ENCODE measurements at regions of chr14 and their contacts with region 1.

Region 1: GRCh38 chr14:53432378-53432802 is 279.3 kb upstream of the DDHD1 start:
- DNase-seq: peak in 1 of 2 experiments; percentile 25
- H3K4me3 ChIP-seq: no peak overlapping the region
- H3K27ac ChIP-seq: no peak overlapping the region
- H3K4me1 ChIP-seq: no peaks in the 10 kb centered on the region
- H3K27me3 ChIP-seq: no peaks in the 10 kb centered on the region
- CTCF ChIP-seq: peak; percentile 82

Region 2: GRCh38 chr14:53539489-53540126 is 107.2 kb after region 1 on chr14:
- CTCF ChIA-PET with region 1: no interaction called
- POLR2A ChIA-PET with region 1: no interaction called
- intact Hi-C with region 1: loop called (anchors 1 kb)
- DNase-seq: peak; percentile 45 to 74
- H3K4me3 ChIP-seq: no peak overlapping the region
- H3K27ac ChIP-seq: no peak overlapping the region
- H3K4me1 ChIP-seq: no peaks in the 10 kb centered on the region
- H3K27me3 ChIP-seq: no peaks in the 10 kb centered on the region
- CTCF ChIP-seq: peak; percentile 88

Region 3: GRCh38 chr14:54025661-54026060 is 593.3 kb after region 1 on chr14:
- CTCF ChIA-PET with region 1: no interaction called
- POLR2A ChIA-PET with region 1: no interaction called
- intact Hi-C with region 1: no loop called
- DNase-seq: no peak
- H3K4me3 ChIP-seq: no peak overlapping the region
- H3K27ac ChIP-seq: no peak overlapping the region
- H3K4me1 ChIP-seq: no peaks in the 10 kb centered on the region
- H3K27me3 ChIP-seq: no peaks in the 10 kb centered on the region
- CTCF ChIP-seq: peak; percentile 60

Measured in PC-9 (cell line).